ENCODE measurements at regions of chr6 and their contacts with region 1.

Region 1: DNA sequence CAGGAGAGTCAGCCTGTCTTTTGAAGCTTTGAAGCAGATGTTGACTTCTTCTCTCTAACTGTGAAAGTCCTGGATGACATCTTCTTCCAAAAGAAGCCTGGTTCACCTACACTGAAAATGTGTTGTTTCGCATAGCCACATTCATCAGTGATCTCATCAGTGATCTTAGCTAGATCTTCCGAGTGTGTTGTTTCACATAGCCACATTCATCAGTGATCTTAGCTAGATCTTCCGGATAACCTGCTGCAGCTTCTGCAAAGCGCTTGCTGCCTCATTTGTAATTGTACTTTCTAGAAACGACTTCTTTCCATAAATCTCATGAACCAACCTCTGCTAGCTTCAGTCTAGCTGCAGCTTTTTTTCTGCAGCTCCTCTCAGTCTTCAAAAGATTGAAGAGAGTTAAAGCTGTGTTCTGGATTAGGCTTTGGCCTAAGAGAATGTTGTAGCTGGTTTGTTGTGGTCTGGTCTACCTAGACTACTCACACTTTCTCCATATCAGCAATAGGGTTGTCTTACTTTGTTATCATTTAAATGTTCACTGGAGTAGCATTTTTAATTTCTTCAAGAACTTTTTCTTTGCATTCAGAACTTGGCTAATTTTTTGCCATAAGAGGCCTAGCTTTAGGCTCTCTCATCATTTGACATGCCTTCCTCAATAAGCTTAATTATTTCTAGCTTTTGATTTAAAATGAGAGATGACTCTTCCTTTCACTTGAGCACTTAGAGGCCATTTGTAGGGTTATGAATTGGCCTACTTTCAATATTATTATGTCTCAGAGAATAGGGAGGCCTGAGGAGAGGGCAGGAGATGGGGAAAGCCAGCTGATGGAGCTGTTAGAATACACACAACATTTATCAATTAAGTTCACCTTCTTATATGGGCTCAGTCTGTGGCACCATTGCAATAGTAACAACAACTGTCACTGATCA is 48.7 kb upstream of the EXOC2 start:
- DNase-seq: no peak

Region 2: DNA sequence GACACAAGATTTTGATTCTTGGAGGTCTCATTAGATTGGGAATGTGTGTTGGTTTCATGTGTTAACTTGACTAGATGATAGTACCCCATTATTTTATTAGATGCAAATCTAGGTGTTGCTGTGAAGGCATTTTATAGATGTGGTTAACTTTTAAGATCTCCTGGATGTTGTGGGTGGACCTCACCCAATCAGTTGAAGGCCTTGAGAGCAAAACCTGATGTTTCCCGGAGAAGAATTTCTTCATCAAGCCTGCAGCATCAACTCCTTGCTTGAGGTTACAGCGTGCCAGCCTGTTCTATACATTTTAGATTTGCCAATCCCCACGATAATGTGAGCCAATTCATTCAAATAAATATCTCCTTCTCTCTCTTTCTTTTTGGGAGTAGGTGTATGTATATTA is 18.1 kb after region 1 on chr6:
- intact Hi-C with region 1: loop called in 1 of 2 experiments (anchors 2 kb)
- DNase-seq: no peak